CD8-positive, alpha-beta T cell (primary cell): ENCODE measurements at regions of chr9 and their contacts with region 1.

Region 1: DNA sequence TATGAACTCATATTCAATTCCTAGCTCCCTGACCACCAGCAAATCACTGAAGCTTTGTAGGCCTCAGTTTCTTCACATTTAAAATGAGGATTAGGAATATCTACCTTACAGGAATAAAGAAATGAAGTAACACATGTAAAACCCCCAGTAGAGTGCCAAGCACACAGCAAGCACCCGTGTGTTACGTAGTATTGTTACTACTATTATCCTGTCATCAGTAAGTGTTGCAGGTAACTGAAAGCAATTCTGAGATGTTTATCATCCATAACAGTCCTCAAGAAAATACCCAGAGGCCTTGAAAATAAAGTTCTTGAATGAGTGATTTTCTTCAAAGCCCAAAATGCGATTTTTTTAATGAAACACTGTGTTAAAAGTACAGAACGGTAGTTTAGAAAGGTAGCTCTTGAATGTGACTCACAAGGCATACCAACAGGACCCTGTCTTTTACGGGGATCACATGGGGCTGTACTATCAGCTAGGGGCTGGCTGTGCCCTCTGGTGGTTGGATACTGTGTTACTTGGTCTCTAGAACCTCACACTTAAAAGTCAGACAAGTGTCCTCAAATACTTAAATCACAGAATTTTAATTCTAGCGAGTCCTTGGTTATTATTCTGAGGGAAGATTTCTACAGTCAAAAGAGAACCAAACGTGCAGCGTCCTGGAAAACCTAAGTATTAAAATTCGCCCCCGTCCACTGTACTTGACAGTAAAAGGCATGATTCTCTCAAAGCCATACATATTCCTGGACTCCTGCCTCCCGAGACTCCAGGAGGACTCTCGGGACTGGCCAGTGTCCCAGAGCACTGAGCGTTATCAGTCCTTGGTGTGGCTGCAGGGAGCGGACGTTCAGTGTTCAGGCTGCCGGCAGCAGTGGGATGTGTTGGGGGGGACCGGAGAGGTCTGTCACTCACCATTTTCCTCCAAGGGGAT is 725 bp downstream of the NDUFB6 start:
- DNase-seq: peak; percentile 49 to 91 (median 76)
- ATAC-seq: peak; percentile 80
- H3K4me3 ChIP-seq: peak overlapping the region; percentile 83 to 89
- H3K4me3 Mint-ChIP-seq: peak overlapping the region; percentile 99
- H3K27ac ChIP-seq: peak overlapping the region; percentile 83 to 85
- H3K27ac Mint-ChIP-seq: peak overlapping the region; percentile 97
- H3K4me1 ChIP-seq: peaks cover 13% of the 10 kb centered on the region
- H3K4me1 Mint-ChIP-seq: peaks cover 33% of the 10 kb centered on the region
- H3K27me3 ChIP-seq: no peaks in the 10 kb centered on the region
- H3K27me3 Mint-ChIP-seq: no peaks in the 10 kb centered on the region
- CTCF ChIP-seq: peak; percentile 71

Region 2: GRCh38 chr9:32384364-32385151 is 187.7 kb before region 1 on chr9 and contains the start of gene ACO1:
- CTCF ChIA-PET with region 1: interaction called, 392 read pairs
- POLR2A ChIA-PET with region 1: interaction called, 19 read pairs
- intact Hi-C with region 1: loop called in 1 of 2 experiments (anchors 1 kb)
- DNase-seq: peak; percentile 74 to 93 (median 87)
- ATAC-seq: peak; percentile 98
- H3K4me3 ChIP-seq: peak within 1 kb of the TSS; percentile 81 to 90
- H3K4me3 Mint-ChIP-seq: peak within 1 kb of the TSS; percentile 84
- H3K27ac ChIP-seq: peak within 1 kb of the TSS; percentile 21 to 45
- H3K27ac Mint-ChIP-seq: peak within 1 kb of the TSS; percentile 55
- H3K4me1 ChIP-seq: peaks cover 17% of the 10 kb centered on the region
- H3K4me1 Mint-ChIP-seq: peaks cover 22% of the 10 kb centered on the region
- H3K27me3 ChIP-seq: no peaks in the 10 kb centered on the region
- H3K27me3 Mint-ChIP-seq: peaks cover 5% of the 10 kb centered on the region
- CTCF ChIP-seq: no peak
- total RNA-seq, gene ACO1: 3.1 to 3.6 TPM

Region 3: GRCh38 chr9:32526041-32526706 is 46.1 kb before region 1 on chr9 and contains the start of gene RIGI:
- CTCF ChIA-PET with region 1: interaction called, 7 read pairs
- POLR2A ChIA-PET with region 1: interaction called, 15 read pairs
- intact Hi-C with region 1: loop called (anchors 1 to 2 kb)
- DNase-seq: peak; percentile 47 to 94 (median 80)
- ATAC-seq: peak; percentile 79
- H3K4me3 ChIP-seq: peak within 1 kb of the TSS; percentile 79 to 85
- H3K4me3 Mint-ChIP-seq: peak within 1 kb of the TSS; percentile 98
- H3K27ac ChIP-seq: peak within 1 kb of the TSS; percentile 85 to 86
- H3K27ac Mint-ChIP-seq: peak within 1 kb of the TSS; percentile 98
- H3K4me1 ChIP-seq: peaks cover 22% of the 10 kb centered on the region
- H3K4me1 Mint-ChIP-seq: peaks cover 55% of the 10 kb centered on the region
- H3K27me3 ChIP-seq: no peaks in the 10 kb centered on the region
- H3K27me3 Mint-ChIP-seq: no peaks in the 10 kb centered on the region
- CTCF ChIP-seq: peak; percentile 60
- total RNA-seq, gene RIGI: 3.4 to 3.9 TPM

Region 4: DNA sequence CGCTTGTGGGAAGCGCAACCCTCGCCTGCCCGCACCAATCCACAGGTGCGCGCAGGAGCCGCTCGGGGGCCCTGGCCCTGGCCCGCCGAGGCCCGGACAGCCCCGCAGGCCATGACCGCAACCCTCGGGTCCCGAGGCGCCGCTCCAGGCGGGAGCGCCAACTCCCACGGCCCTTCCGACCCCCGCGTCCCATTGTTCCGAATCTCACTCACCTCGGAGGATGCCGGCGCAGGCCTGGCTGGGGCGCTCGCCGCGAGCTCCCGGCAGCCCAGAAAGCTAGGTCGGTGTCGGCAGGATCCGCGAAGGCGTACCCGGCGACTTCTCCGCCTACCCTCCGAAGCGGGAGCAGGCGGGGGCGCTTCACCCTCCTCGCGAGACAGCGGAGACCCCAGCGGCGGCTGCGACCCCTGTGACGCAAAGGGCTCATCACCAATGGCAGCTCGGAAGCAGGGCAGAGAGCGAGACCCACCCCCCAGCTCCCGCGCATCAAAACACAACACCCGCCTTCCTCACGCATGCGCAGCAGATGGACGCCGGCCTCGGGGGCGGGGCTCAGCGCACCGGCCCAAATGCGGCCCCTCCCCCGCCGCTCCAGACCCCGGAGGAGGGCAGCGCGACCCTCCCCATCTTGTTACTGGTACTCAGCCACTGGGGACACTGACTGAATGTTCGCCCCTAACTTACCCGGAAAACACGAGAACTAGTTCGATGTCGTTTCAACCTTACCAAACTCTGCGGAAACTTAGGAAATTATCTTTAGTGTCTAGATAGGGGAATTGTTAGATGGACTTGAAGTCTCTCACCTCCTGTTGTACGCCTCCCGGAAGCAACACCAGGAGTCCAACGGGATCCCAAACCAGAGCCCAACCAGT is 21.4 kb before region 1 on chr9:
- CTCF ChIA-PET with region 1: interaction called, 36 read pairs
- POLR2A ChIA-PET with region 1: interaction called, 42 read pairs
- intact Hi-C with region 1: loop called (anchors 1 kb)
- DNase-seq: peak; percentile 90 to 99 (median 96)
- ATAC-seq: peak; percentile 85
- H3K4me3 ChIP-seq: peak overlapping the region; percentile 85 to 87
- H3K4me3 Mint-ChIP-seq: peak overlapping the region; percentile 94
- H3K27ac ChIP-seq: peak overlapping the region; percentile 91 to 97
- H3K27ac Mint-ChIP-seq: peak overlapping the region; percentile 99
- H3K4me1 ChIP-seq: peaks cover 23% of the 10 kb centered on the region
- H3K4me1 Mint-ChIP-seq: peaks cover 57% of the 10 kb centered on the region
- H3K27me3 ChIP-seq: no peaks in the 10 kb centered on the region
- H3K27me3 Mint-ChIP-seq: no peaks in the 10 kb centered on the region
- CTCF ChIP-seq: peak; percentile 19

Region 5: GRCh38 chr9:33024966-33025571 is 452.8 kb after region 1 on chr9 and contains the start of gene DNAJA1:
- CTCF ChIA-PET with region 1: no interaction called
- POLR2A ChIA-PET with region 1: interaction called, 3 read pairs
- intact Hi-C with region 1: loop called in 1 of 2 experiments (anchors 1 kb)
- DNase-seq: peak; percentile 92 to 98 (median 96)
- ATAC-seq: peak; percentile 80
- H3K4me3 ChIP-seq: peak within 1 kb of the TSS; percentile 100
- H3K4me3 Mint-ChIP-seq: peak within 1 kb of the TSS; percentile 96
- H3K27ac ChIP-seq: peak within 1 kb of the TSS; percentile 100
- H3K27ac Mint-ChIP-seq: peak within 1 kb of the TSS; percentile 96
- H3K4me1 ChIP-seq: peaks cover 63% of the 10 kb centered on the region
- H3K4me1 Mint-ChIP-seq: peaks cover 70% of the 10 kb centered on the region
- H3K27me3 ChIP-seq: no peaks in the 10 kb centered on the region
- H3K27me3 Mint-ChIP-seq: no peaks in the 10 kb centered on the region
- CTCF ChIP-seq: no peak
- total RNA-seq, gene DNAJA1: 170 to 172 TPM

Region 6: DNA sequence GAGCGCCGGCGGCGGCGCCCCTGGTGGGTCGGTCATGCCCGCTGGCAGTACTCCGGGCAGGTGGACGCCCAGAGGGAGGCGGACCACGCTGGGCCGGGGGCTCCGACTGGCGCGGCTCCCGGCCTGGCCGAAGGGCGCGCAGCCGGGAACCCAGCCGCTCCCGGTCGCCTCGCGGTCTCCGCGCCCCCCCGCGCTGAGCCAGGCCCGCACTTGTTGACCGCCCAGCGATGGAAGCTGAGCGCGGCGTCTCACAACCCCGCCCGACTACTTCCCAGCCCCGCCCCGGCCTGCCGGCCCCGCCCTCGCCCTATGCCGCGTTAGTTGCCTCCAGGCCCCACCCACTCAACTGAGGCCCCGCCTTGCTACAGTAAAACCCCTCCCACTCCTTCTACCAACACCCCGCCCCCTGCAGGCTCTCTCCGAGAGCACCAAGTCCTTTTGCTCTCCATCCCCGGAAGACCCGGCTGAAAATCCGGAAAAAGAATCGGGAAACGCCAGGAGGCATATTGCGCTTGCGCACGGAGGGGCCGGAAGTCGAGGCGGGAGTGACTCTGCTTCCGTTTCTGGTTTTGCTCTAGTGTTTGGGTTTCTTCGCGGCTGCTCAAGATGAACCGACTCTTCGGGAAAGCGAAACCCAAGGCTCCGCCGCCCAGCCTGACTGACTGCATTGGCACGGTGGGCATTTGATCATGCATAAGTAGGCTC is 692.4 kb after region 1 on chr9 and contains the starts of genes BAG1 and CHMP5:
- CTCF ChIA-PET with region 1: no interaction called
- POLR2A ChIA-PET with region 1: no interaction called
- intact Hi-C with region 1: loop called in 1 of 2 experiments (anchors 10 kb)
- DNase-seq: peak; percentile 99 to 100 (median 100)
- ATAC-seq: peak; percentile 97
- H3K4me3 ChIP-seq: peak within 1 kb of the TSS; percentile 69 to 98
- H3K4me3 Mint-ChIP-seq: peak within 1 kb of the TSS; percentile 96
- H3K27ac ChIP-seq: peak within 1 kb of the TSS; percentile 74 to 94
- H3K27ac Mint-ChIP-seq: peak within 1 kb of the TSS; percentile 97
- H3K4me1 ChIP-seq: peaks cover 21% of the 10 kb centered on the region
- H3K4me1 Mint-ChIP-seq: peaks cover 62% of the 10 kb centered on the region
- H3K27me3 ChIP-seq: no peaks in the 10 kb centered on the region
- H3K27me3 Mint-ChIP-seq: no peaks in the 10 kb centered on the region
- CTCF ChIP-seq: no peak
- total RNA-seq, gene BAG1: 56.8 to 64.3 TPM
- total RNA-seq, gene CHMP5: 13.4 to 14.2 TPM

Region 7: DNA sequence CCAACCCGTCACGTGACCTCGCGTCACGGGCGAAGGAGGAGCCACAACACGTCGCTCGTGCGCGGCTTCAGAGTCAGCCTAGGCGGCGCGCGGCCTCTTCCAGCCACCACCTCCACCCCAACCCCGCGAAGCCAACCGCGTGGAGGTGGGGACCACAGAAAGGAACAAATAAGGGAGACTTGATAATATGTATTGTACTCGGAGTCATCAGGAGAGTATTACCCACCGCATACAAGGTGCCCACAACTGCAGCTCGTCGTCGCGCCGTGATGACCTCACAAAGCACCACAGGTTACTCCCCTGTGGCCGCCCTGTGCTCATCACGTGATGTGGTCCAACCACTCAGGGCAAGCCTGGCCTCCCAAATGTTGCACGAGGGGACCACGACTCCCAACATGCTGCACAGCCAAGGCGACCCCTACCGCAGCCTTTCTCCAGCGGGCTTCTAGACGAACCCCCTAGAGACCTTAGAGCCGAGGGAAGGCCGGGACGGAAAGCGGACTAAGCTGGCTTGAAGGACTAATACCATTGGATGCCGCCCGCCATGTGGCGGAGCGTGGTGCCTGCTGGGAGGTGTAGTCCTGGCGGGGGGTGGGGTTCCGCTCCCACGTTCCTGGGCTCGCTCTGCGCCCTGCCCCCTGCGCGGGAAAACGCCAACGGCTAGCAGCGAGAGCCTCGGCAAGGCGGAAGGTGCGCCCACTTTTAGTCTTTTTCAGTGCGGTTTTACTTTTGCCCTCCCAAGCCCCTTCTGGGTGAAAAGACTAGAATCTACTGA is 1476.9 kb after region 1 on chr9:
- CTCF ChIA-PET with region 1: no interaction called
- POLR2A ChIA-PET with region 1: no interaction called
- intact Hi-C with region 1: loop called in 1 of 2 experiments (anchors 5 kb)
- DNase-seq: peak; percentile 92 to 99 (median 97)
- ATAC-seq: peak; percentile 81
- H3K4me3 ChIP-seq: peak overlapping the region; percentile 76 to 79
- H3K4me3 Mint-ChIP-seq: peak overlapping the region; percentile 97
- H3K27ac ChIP-seq: peak overlapping the region; percentile 87 to 95
- H3K27ac Mint-ChIP-seq: peak overlapping the region; percentile 100
- H3K4me1 ChIP-seq: peaks cover 23% of the 10 kb centered on the region
- H3K4me1 Mint-ChIP-seq: peaks cover 29% of the 10 kb centered on the region
- H3K27me3 ChIP-seq: no peaks in the 10 kb centered on the region
- H3K27me3 Mint-ChIP-seq: no peaks in the 10 kb centered on the region
- CTCF ChIP-seq: no peak